ENCODE measurements at regions of chr10 and their contacts with region 1.

Region 1: DNA sequence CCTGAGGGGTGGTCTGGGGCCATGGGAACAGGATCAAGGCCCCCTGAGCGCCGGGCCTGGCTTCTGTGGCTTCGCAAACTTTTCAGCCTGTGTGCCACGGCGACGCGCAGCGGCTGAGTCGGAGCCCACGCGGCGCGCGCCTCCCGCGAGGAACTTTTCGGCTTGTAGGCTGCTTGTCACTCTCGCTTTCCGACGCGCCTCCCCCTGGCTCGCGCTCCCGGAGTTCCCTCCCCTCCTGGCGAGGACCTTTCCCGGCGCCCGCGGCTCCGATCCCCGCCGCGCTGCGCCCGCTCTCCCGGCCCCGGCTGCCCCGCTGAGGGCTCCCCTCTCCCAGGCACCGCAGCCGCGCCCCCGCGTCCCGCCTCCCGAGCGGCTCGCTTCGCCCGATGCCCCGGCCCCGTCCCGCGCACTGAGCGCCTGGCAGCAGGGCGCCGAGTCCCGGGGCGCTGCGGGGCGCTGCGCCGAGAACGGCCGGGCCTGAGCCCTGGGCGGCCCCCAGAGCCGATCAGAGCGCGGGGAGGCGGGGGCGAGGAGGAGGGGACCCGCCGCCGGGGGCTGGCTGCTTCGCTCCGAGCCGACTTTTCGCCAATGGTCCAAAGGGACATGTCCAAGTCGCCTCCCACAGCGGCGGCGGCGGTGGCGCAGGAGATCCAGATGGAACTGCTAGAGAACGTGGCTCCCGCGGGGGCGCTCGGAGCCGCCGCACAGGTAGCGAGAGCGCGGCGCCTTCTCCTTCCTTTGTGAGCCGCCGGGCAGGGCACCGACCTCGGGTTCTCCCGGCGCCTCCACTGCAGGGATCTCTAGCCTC is at the start of gene CACNB2:
- DNase-seq: peak in 1 of 2 donors; percentile 84
- H3K4me3 ChIP-seq: peak within 1 kb of the TSS; percentile 67 to 69
- H3K27ac ChIP-seq: peak within 1 kb of the TSS; percentile 80 to 82
- H3K4me1 ChIP-seq: peaks cover 0 to 10% of the 10 kb centered on the region in 2 donors
- H3K27me3 ChIP-seq: no peaks in the 10 kb centered on the region
- CTCF ChIP-seq: no peak
- total RNA-seq, gene CACNB2: 0.96 TPM

Region 2: GRCh38 chr10:18157881-18158280 is 17.5 kb after region 1 on chr10:
- intact Hi-C with region 1: loop called (anchors 1 kb)
- DNase-seq: no peak
- H3K4me3 ChIP-seq: peak overlapping the region; percentile 14 to 31
- H3K27ac ChIP-seq: peak overlapping the region; percentile 33 to 72
- H3K4me1 ChIP-seq: peaks cover 2 to 22% of the 10 kb centered on the region in 2 donors
- H3K27me3 ChIP-seq: no peaks in the 10 kb centered on the region
- CTCF ChIP-seq: no peak

Region 3: DNA sequence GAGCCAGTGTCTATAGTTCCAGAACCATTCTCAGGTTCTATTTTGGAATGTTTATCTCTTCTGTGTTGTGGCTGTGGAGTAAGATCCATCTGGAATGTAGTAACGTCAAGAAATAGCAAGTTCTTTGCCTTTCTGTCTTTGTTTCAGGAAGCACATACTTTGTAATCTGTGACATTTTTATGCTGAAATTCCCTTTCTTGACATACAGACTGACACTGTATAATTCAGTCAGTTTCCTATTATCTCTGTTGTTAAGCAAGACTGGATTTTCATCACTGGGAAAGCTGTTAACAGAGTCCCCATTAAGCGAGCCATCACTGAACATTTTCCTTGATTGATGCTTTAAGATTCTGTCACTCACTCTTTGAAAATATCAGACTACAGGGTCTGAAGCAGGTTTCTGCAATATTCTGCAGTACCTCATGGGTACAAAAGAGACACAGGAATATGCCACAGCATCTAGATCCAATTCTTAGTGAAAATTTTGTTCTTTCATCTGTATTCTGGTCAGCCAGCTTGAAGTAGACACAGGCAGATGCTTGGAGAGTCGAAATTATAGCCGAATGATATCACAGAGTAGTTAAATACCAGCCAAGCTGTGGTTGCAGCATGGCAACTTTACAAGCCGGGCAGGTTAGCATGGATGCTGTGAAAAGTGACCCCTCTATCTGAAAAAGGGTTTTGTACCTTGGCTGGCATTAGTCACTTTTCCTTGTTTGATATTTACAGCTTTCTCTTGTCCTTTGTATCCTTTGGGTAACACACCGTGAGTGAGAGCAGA is 62.5 kb after region 1 on chr10:
- intact Hi-C with region 1: loop called (anchors 1 kb)
- DNase-seq: no peak
- H3K4me3 ChIP-seq: peak overlapping the region; percentile 4 to 8
- H3K27ac ChIP-seq: peak overlapping the region; percentile 50 to 54
- H3K4me1 ChIP-seq: peaks cover 0 to 5% of the 10 kb centered on the region in 2 donors
- H3K27me3 ChIP-seq: no peaks in the 10 kb centered on the region
- CTCF ChIP-seq: no peak

Region 4: DNA sequence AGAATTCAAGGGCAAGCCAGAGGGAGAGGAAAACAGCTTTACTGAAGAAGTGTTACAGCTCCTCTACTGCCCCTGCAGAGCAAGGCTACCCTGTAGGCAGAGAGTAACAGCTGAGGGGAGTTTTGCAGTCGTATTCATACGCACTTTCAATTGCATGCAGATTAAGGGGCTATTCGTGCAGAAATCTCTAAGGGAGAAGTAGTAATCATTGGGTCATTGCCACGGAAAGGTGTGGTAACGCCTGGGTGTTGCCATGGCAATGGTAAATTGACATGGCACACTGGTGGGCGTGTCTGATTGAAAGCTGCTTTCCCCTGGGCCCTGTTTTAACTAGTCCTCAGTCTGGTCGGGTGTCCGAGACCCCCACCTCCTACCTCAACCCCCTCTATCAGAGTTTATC is 283.8 kb after region 1 on chr10:
- intact Hi-C with region 1: no loop called
- DNase-seq: no peak
- H3K4me3 ChIP-seq: no peak overlapping the region
- H3K27ac ChIP-seq: no peak overlapping the region
- H3K4me1 ChIP-seq: no peaks in the 10 kb centered on the region
- H3K27me3 ChIP-seq: no peaks in the 10 kb centered on the region
- CTCF ChIP-seq: no peak

Region 5: DNA sequence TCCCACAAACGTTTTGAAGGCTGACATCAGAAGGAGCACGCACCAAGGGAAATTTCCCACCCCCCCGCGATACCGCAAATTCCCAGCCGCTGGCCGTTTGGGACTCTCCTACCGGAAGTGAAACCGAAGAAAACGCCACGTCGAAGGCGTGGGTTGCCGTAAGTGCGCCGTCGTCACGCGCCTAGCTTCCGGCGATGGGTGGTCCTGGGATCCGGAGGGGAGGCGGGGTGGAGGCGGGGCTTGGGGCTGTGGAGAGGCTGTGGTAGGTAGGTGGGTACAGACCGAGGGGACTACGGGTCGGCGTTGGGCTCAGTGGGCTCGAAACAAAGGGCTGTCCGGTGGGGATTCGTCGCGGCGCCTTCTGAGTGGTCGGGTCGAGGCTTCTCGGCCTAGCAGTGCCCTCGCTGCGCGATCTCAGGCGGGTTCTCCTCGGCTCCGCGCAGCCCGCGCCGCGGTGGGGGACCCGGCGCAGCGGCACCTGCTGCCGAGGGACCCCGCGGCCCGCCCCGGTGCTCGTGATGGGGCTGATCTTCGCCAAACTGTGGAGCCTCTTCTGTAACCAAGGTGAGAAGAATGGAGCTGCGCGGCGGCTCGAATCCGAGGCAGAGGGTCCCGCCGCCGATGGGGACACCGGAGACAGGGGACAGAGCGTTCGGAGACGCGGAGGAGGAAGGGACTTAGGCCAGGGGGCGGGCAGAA is 518.9 kb after region 1 on chr10 and contains the start of gene ARL5B:
- intact Hi-C with region 1: loop called (anchors 2 kb)
- DNase-seq: peak; percentile 94 to 99
- H3K4me3 ChIP-seq: peak within 1 kb of the TSS; percentile 87 to 99
- H3K27ac ChIP-seq: peak within 1 kb of the TSS; percentile 98
- H3K4me1 ChIP-seq: peaks cover 8 to 19% of the 10 kb centered on the region in 2 donors
- H3K27me3 ChIP-seq: no peaks in the 10 kb centered on the region
- CTCF ChIP-seq: peak in 1 of 3 experiments; percentile 10
- total RNA-seq, gene ARL5B: 8.3 TPM